ENCODE measurements at regions of chr5 and their contacts with region 1.

Region 1: GRCh38 chr5:138752951-138753793 is at the start of gene CTNNA1:
- DNase-seq: peak; percentile 83
- ATAC-seq: peak; percentile 90 to 92
- total RNA-seq, gene CTNNA1: 259 to 314 TPM

Region 2: GRCh38 chr5:138575194-138576015 is 177.8 kb before region 1 on chr5 and contains the start of gene HSPA9:
- intact Hi-C with region 1: loop called in 1 of 2 experiments (anchors 5 kb)
- DNase-seq: peak; percentile 99
- ATAC-seq: peak; percentile 97 to 98
- total RNA-seq, gene HSPA9: 208 to 261 TPM

Measured in left cardiac atrium (tissue), 4 donors.